PC-9 (cell line): ENCODE measurements at regions of chr19 and their contacts with region 1.

Region 1: GRCh38 chr19:44903602-44904425 is 1.8 kb upstream of the APOE start:
- DNase-seq: peak; percentile 42 to 69
- H3K4me3 ChIP-seq: no peak overlapping the region
- H3K27ac ChIP-seq: no peak overlapping the region
- H3K4me1 ChIP-seq: no peaks in the 10 kb centered on the region; the same call in 1 of the 2 replicates
- H3K27me3 ChIP-seq: no peaks in the 10 kb centered on the region
- CTCF ChIP-seq: peak; percentile 100

Region 2: DNA sequence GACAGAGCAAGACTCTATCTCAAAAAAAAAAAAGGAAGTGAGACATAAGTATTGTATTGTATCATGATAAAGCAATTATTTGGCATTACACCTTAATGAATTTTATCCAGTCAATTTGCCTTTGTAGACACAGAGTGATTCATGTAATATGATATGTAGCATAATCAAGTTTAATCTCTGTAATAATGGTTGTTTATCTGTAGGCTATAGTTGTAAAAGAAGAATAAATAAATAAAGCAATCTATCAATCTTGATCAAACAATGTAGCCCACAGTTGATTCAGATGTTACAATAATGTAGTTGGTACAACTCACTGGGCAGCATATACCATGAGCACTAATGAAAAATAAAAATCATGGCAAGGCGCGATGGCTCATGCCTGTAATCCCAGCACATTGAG is 345.9 kb before region 1 on chr19:
- CTCF ChIA-PET with region 1: no interaction called
- POLR2A ChIA-PET with region 1: interaction called, 15 read pairs
- intact Hi-C with region 1: no loop called
- DNase-seq: peak in 1 of 2 experiments; percentile 91
- H3K4me3 ChIP-seq: no peak overlapping the region
- H3K27ac ChIP-seq: no peak overlapping the region
- H3K4me1 ChIP-seq: peaks cover 38% of the 10 kb centered on the region
- H3K27me3 ChIP-seq: no peaks in the 10 kb centered on the region
- CTCF ChIP-seq: no peak

Region 3: GRCh38 chr19:44694184-44694579 is 209.6 kb before region 1 on chr19:
- CTCF ChIA-PET with region 1: no interaction called
- POLR2A ChIA-PET with region 1: no interaction called
- intact Hi-C with region 1: no loop called
- DNase-seq: no peak
- H3K4me3 ChIP-seq: no peak overlapping the region
- H3K27ac ChIP-seq: peak overlapping the region; percentile 100
- H3K4me1 ChIP-seq: peaks cover 69% of the 10 kb centered on the region
- H3K27me3 ChIP-seq: no peaks in the 10 kb centered on the region
- CTCF ChIP-seq: peak; percentile 65; the same call in 1 of the 2 replicates

Region 4: DNA sequence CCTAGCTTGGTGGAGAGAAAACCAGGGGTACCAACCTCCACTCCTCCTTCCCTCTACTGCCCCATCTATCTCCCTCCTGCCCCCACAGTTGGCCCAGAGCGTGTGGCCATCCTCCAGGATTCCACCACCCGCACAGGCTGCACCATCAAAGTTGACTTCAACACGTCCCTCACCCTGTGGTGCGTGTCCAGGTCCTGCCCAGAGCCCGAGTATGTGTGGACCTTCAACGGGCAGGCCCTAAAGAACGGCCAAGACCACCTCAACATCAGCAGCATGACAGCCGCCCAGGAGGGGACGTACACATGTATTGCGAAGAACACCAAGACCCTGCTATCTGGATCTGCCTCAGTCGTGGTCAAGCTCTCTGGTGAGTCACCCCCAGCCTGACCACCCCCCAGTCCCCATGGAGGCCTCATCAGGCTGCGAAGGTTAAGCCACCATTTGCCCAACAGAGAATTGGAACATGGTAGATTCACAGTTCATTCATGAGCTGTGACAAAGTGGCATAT is 198.3 kb before region 1 on chr19:
- CTCF ChIA-PET with region 1: interaction called, 14 read pairs
- POLR2A ChIA-PET with region 1: no interaction called
- intact Hi-C with region 1: no loop called
- DNase-seq: no peak
- H3K4me3 ChIP-seq: no peak overlapping the region
- H3K27ac ChIP-seq: no peak overlapping the region
- H3K4me1 ChIP-seq: no peaks in the 10 kb centered on the region
- H3K27me3 ChIP-seq: no peaks in the 10 kb centered on the region
- CTCF ChIP-seq: no peak

Region 5: GRCh38 chr19:44764975-44765948 is 138.6 kb before region 1 on chr19:
- CTCF ChIA-PET with region 1: no interaction called
- POLR2A ChIA-PET with region 1: interaction called, 10 read pairs
- intact Hi-C with region 1: no loop called
- DNase-seq: peak in 1 of 2 experiments; percentile 71
- H3K4me3 ChIP-seq: no peak overlapping the region
- H3K27ac ChIP-seq: peak overlapping the region; percentile 31; the same call in 1 of the 2 replicates
- H3K4me1 ChIP-seq: peaks cover 22% of the 10 kb centered on the region
- H3K27me3 ChIP-seq: no peaks in the 10 kb centered on the region
- CTCF ChIP-seq: no peak

Region 6: DNA sequence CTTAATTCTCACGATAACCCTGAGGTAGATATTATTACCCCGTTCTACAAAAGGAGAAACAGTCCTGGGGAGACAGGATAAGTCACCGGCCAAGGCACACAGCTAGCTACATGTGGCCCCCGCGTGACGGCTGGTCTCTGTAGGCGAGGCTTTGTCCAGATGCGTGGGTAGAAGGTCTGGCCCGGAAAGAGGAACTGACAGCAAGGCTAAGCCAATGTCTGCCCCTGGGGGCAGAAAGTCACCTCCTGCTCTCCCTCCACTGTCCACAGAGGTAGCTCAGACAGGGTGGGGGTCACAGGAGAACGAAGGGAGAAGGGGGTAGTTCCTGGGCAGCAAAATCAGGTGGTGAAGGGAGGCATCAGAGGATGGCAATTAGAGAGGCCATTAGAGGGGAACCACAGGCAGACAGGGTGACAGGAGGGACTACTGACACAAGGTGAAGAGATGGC is 40.0 kb after region 1 on chr19:
- CTCF ChIA-PET with region 1: no interaction called
- POLR2A ChIA-PET with region 1: no interaction called
- intact Hi-C with region 1: no loop called
- DNase-seq: no peak
- H3K4me3 ChIP-seq: no peak overlapping the region
- H3K27ac ChIP-seq: no peak overlapping the region
- H3K4me1 ChIP-seq: no peaks in the 10 kb centered on the region
- H3K27me3 ChIP-seq: no peaks in the 10 kb centered on the region
- CTCF ChIP-seq: no peak

Region 7: DNA sequence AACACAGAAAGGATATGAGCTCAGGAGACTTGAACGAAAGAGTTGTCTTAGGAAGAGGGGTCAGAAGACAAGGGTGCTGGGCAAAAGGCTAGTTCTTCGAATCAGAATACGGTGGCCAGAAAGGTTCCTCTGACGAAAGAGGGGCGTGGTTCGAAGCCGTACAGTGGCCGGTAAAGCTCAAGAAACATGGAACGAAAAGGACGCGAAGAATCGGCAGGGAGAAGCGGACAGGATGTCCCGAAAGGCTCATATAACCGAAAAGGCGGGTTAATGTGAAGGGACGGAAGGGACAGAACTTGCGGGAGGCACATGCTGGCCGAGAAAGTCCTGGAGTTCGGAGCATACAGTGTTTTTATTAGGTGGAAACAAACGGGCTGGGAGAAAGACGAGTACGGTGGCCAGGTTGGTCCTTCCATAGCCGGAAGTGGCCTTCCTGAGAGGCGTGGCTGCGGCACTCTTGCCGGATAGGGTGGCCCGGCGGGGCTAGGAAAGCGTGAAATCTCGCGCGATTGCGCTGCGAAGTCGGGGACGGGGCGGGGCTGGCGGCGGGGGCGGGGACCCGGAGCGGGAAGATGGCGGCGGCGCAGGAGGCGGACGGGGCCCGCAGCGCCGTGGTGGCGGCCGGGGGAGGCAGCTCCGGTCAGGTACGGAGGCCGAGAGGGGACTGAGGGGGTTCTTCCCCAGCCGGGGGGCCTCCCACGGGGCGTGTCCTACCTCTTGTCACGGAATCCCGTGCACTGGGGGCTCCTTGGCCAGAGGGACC is 51.2 kb after region 1 on chr19 and contains the start of gene CLPTM1:
- CTCF ChIA-PET with region 1: no interaction called
- POLR2A ChIA-PET with region 1: interaction called, 4 read pairs
- intact Hi-C with region 1: loop called (anchors 2 kb)
- DNase-seq: peak; percentile 93 to 94
- H3K4me3 ChIP-seq: peak within 1 kb of the TSS; percentile 89
- H3K27ac ChIP-seq: peak within 1 kb of the TSS; percentile 87
- H3K4me1 ChIP-seq: peaks cover 20% of the 10 kb centered on the region
- H3K27me3 ChIP-seq: no peaks in the 10 kb centered on the region
- CTCF ChIP-seq: no peak
- total RNA-seq, gene CLPTM1: 98.2 and 111 TPM in 2 replicates

Region 8: DNA sequence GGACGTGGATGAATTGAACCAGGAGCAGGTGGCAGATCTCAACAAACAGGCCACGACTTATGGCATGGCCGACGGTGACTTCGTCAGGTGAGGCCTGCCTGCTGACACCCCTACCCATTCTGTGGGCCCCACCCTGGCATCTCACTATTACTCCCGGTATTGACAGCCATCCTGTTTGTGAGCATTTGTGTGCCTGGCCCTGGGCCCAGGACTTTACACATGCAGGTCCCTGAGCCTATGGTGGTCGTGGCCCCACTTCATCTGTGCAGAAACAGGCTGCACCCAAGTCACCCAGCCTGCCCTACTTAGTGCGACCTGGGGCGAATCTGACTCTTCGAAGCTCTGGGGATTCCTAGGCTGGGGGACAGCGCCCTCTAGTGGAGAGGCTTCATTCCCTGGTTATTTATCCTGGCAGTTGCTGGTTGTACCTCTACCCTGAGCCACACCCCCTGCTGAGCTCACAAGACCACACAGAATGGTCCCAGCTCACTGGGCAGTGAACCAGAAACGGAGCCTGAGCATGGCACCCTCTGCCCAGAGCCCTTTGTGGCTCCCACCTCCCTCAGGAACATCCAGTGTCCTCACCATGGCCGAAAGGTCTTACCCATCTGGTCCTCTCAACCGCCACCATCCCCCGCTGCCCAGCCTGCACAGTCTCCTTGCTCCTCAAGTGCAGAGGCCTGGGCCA is 155.6 kb after region 1 on chr19:
- CTCF ChIA-PET with region 1: no interaction called
- POLR2A ChIA-PET with region 1: no interaction called
- intact Hi-C with region 1: loop called (anchors 10 kb)
- DNase-seq: peak; percentile 69 to 76
- H3K4me3 ChIP-seq: no peak overlapping the region
- H3K27ac ChIP-seq: no peak overlapping the region
- H3K4me1 ChIP-seq: no peaks in the 10 kb centered on the region
- H3K27me3 ChIP-seq: no peaks in the 10 kb centered on the region
- CTCF ChIP-seq: peak; percentile 99